ENCODE measurements at regions of chr1 and their contacts with region 1.

Region 1: DNA sequence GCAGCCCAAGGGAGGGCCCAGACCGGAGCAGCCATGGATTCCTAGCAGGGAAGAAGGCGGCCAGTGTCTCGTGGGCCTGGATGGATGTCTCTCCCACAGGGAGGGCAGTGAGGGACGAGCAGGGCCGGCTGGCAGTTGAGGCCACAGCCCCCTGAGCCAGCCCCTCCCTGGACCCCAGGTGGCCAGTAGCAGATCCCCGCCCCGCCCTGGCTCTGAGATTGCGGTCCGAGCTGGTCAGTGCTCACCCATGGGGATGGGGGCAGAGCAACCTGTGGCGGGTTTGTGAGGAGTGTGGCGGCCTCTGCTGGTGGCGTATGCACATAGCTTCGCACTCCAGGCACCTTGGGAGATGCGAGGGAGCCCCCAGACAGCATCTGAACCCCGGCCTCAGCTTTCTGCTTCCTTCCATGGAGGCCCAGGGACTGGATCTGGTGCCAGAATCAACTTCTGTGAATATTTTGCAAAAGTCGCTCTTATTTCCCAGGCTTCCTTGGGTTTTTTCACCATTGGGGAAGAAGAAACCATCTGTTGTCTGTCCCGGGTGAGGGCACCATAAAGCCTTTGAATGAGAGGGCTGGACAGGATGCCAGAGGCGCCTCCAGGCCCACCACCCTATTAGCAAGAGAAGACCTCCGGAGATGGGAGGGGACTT is 8.4 kb upstream of the KCNN3 start:
- DNase-seq: peak; percentile 87
- ATAC-seq: peak; percentile 98

Region 2: GRCh38 chr1:154669464-154670282 is 208.8 kb before region 1 on chr1:
- intact Hi-C with region 1: loop called (anchors 2 kb)
- DNase-seq: peak; percentile 80
- ATAC-seq: peak; percentile 99

Region 3: GRCh38 chr1:154923695-154924094 is 45.2 kb after region 1 on chr1:
- intact Hi-C with region 1: no loop called
- DNase-seq: no peak
- ATAC-seq: no peak

Measured in Right ventricle myocardium superior (tissue), 1 donor.